K562 (cell line): ENCODE measurements at regions of chr2 and their contacts with region 1.

Region 1: DNA sequence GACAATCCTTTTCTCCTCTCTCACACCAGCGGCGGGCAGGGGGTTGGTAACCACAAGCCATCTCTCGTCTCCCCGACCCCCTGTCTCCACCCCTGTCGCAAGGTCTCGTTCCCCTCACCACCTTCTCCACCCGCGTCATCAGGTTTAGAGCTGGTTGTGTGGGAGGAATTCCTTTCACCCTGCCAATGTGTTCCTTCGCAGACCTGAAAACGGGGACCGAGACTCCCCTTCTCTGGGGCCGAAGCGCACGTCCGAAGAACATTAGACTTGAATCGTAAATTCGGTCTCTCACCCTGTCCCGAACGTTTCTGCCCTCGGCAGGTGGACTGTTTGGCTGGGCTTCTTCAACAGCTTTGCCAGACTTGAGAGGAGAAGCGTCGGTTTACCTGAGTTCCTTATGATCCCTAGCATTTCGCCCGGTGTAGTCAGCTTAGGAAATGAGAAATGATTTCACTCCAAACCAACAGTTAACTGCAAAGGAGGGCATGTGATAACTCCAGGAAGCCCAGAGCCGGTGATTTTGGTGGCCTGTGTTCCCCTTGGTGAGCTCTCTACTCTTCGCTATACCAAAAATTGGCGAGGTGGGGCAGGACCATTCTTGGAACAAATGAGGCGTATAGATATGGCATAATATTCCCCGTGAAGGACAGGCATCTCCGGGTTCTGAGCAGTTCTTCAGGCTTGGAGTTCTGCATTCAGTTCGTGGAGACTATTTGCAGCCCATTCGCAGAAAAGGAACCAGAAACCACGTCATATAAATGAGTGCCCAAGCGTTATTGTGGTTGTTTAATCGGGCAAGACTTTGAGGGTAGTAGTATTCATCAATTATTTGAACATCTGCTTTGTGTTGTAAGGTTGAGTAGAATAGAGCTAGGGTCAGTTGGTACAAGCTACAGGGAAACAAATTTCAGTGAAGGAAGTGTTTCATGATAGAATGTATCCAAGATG is 694 bp downstream of the CFAP36 start:
- DNase-seq: peak; percentile 21 to 45 (median 38)
- ATAC-seq: peak; percentile 25
- H3K4me3 ChIP-seq: peak overlapping the region; percentile 84
- H3K27ac ChIP-seq: peak overlapping the region; percentile 53
- H3K4me1 ChIP-seq: peaks cover 2 to 3% of the 10 kb centered on the region in 2 experiments; a peak in 2 of 5 replicates
- H3K27me3 ChIP-seq: no peaks in the 10 kb centered on the region
- CTCF ChIP-seq: no peak
- EP300 ChIP-seq: no peak
- POLR2A ChIP-seq: no peak
- RAD21 ChIP-seq: no peak

Region 2: GRCh38 chr2:54634564-54635511 is 885.4 kb before region 1 on chr2:
- CTCF ChIA-PET with region 1: no interaction called
- POLR2A ChIA-PET with region 1: no interaction called
- in situ Hi-C with region 1: no loop called
- intact Hi-C with region 1: no loop called
- DNase-seq: no peak
- ATAC-seq: peak; percentile 45; the same call in 1 of the 3 replicates
- H3K4me3 ChIP-seq: no peak overlapping the region
- H3K27ac ChIP-seq: no peak overlapping the region
- H3K4me1 ChIP-seq: peaks cover 3% of the 10 kb centered on the region in 2 experiments; a peak in 1 of 5 replicates
- H3K27me3 ChIP-seq: no peaks in the 10 kb centered on the region
- CTCF ChIP-seq: no peak
- EP300 ChIP-seq: no peak
- POLR2A ChIP-seq: no peak
- RAD21 ChIP-seq: no peak

Region 3: GRCh38 chr2:54838585-54839035 is 681.6 kb before region 1 on chr2:
- CTCF ChIA-PET with region 1: no interaction called
- POLR2A ChIA-PET with region 1: no interaction called
- in situ Hi-C with region 1: no loop called
- intact Hi-C with region 1: no loop called
- DNase-seq: peak; percentile 57 to 67 (median 64)
- ATAC-seq: peak; percentile 93
- H3K4me3 ChIP-seq: no peak overlapping the region
- H3K27ac ChIP-seq: no peak overlapping the region
- H3K4me1 ChIP-seq: no peaks in the 10 kb centered on the region
- H3K27me3 ChIP-seq: peaks cover 21 to 43% of the 10 kb centered on the region in 2 experiments
- CTCF ChIP-seq: peak; percentile 63 to 81 (median 78)
- EP300 ChIP-seq: no peak
- POLR2A ChIP-seq: no peak
- RAD21 ChIP-seq: peak; percentile 65 to 77

Region 4: DNA sequence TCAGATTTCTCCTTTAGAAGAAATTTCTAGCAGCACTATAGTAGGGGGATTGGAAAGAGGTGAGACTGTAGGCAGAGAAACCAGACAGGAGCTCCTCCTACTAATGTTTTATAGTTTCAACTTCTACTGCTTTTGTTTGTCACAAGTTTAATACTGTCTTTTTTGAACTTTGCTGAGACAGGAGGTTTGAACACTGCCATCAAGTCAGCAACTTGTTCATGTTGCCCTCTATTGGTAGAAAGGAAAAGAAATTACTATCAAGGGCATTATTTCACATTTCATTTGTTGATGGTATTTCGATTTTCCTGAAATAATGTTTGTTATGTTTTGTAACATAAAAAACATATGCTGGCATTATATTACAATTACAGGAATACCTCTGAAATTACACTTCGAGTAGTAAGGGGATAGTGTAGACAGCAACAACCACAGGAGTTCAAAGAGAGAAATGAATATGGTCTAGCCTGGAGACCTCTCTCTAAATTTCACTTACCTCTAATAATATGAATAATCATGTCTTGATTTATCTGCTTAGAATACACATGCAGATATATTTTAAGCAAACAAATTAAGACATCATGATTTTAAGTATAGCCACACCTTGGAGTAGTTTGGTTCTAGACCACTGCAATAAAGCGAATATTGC is 88.1 kb before region 1 on chr2:
- CTCF ChIA-PET with region 1: no interaction called
- POLR2A ChIA-PET with region 1: no interaction called
- in situ Hi-C with region 1: no loop called
- intact Hi-C with region 1: loop called (anchors 2 kb)
- DNase-seq: peak in 2 of 4 experiments; percentile 22 to 30
- ATAC-seq: peak; percentile 68
- H3K4me3 ChIP-seq: no peak overlapping the region
- H3K27ac ChIP-seq: no peak overlapping the region
- H3K4me1 ChIP-seq: no peaks in the 10 kb centered on the region
- H3K27me3 ChIP-seq: no peaks in the 10 kb centered on the region
- CTCF ChIP-seq: peak; percentile 26 to 73 (median 47); a peak in 5 of 6 replicates
- EP300 ChIP-seq: no peak
- POLR2A ChIP-seq: no peak
- RAD21 ChIP-seq: peak; percentile 45 to 74

Region 5: DNA sequence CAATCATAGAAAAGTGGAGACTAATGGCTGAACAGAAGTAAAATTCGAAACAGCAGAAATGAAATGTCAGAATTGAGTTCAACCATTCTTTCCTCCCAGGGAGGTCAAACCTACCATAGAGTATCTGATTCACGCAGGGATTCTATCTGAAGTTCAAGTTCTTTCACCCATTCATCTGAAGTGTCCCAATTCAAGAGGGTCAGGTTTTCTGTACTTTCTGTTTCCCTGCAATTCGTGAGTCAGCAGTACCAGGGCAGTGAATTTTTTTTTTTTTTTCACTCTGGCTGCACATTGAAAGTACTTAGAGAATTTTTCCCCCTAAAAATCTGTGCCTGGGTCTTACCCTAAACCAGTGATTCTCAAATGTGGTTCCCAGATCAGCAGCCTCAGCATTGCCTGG is 59.6 kb before region 1 on chr2:
- CTCF ChIA-PET with region 1: no interaction called
- POLR2A ChIA-PET with region 1: interaction called, 4 read pairs
- in situ Hi-C with region 1: no loop called
- intact Hi-C with region 1: loop called (anchors 2 kb)
- DNase-seq: peak in 2 of 4 experiments; percentile 29 to 30
- ATAC-seq: peak; percentile 57
- H3K4me3 ChIP-seq: no peak overlapping the region
- H3K27ac ChIP-seq: peak overlapping the region; percentile 74; the same call in 1 of the 3 replicates
- H3K4me1 ChIP-seq: peaks cover 0 to 25% of the 10 kb centered on the region in 2 experiments; a peak in 4 of 5 replicates
- H3K27me3 ChIP-seq: no peaks in the 10 kb centered on the region
- CTCF ChIP-seq: no peak
- EP300 ChIP-seq: no peak
- POLR2A ChIP-seq: no peak
- RAD21 ChIP-seq: no peak

Region 6: GRCh38 chr2:55530539-55531081 is 10.4 kb after region 1 on chr2:
- CTCF ChIA-PET with region 1: no interaction called
- POLR2A ChIA-PET with region 1: interaction called, 10 read pairs
- in situ Hi-C with region 1: no loop called
- intact Hi-C with region 1: no loop called
- DNase-seq: no peak
- ATAC-seq: no peak
- H3K4me3 ChIP-seq: no peak overlapping the region
- H3K27ac ChIP-seq: no peak overlapping the region
- H3K4me1 ChIP-seq: no peaks in the 10 kb centered on the region; a peak in 1 of 5 replicates
- H3K27me3 ChIP-seq: no peaks in the 10 kb centered on the region
- CTCF ChIP-seq: no peak
- EP300 ChIP-seq: no peak
- POLR2A ChIP-seq: no peak
- RAD21 ChIP-seq: no peak

Region 7: GRCh38 chr2:55604027-55604565 is 83.9 kb after region 1 on chr2:
- CTCF ChIA-PET with region 1: no interaction called
- POLR2A ChIA-PET with region 1: no interaction called
- in situ Hi-C with region 1: no loop called
- intact Hi-C with region 1: no loop called
- DNase-seq: no peak
- ATAC-seq: no peak
- H3K4me3 ChIP-seq: no peak overlapping the region
- H3K27ac ChIP-seq: no peak overlapping the region
- H3K4me1 ChIP-seq: peaks cover 0 to 2% of the 10 kb centered on the region in 2 experiments; a peak in 2 of 5 replicates
- H3K27me3 ChIP-seq: no peaks in the 10 kb centered on the region
- CTCF ChIP-seq: no peak
- EP300 ChIP-seq: no peak
- POLR2A ChIP-seq: no peak
- RAD21 ChIP-seq: no peak

Region 8: DNA sequence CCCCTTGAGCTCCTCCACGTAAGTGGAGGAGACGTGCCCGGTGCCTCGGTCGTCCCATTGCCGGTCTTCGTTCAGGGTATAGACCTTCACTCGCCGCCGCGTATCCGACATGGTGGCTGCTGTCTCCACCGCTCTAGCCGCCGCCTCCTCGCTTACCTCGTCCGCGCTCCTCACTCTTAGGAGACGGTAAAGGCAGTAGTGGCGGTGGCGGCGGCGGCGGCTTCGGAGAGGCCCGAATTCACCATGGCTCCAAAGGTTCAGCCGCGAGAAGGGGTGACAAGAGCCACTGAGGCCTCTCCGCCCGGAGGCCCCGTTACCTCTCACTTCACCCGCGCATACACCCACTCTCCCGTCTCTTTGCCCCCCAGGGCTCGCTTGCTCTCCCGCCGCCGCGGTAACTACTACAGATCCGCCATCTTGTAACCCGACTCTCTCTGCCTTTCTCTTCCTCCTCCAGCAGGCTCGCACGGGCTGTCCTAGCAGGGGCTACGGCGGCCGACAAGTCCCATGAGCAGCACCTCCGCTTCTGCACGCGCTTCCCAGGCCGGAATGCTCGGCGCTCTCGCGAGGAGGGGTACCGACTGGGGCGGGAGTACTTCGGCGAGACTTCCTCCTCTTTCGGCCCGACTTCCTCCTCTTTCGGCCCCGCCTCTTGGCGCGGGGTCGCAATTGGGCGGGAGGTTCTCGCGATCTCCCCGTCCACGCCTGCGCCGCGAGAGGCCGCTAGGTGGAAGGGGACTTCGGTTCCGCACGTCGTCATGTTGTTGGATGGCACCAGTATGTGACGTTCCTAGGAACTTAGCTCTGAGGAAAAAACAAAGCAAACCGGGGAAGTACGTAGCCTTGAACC is 97.2 kb after region 1 on chr2 and contains the start of gene PPP4R3B:
- CTCF ChIA-PET with region 1: no interaction called
- POLR2A ChIA-PET with region 1: interaction called, 8 read pairs
- in situ Hi-C with region 1: no loop called
- intact Hi-C with region 1: loop called (anchors 2 kb)
- DNase-seq: peak; percentile 89 to 99 (median 94)
- ATAC-seq: peak; percentile 86
- H3K4me3 ChIP-seq: peak within 1 kb of the TSS; percentile 98
- H3K27ac ChIP-seq: peak within 1 kb of the TSS; percentile 99
- H3K4me1 ChIP-seq: peaks cover 6 to 8% of the 10 kb centered on the region in 2 experiments; a peak in 4 of 5 replicates
- H3K27me3 ChIP-seq: no peaks in the 10 kb centered on the region
- CTCF ChIP-seq: peak; percentile 21 to 49 (median 48); a peak in 3 of 6 replicates
- EP300 ChIP-seq: no peak
- POLR2A ChIP-seq: peak; percentile 95
- RAD21 ChIP-seq: no peak
- polyA plus RNA-seq, gene PPP4R3B: 13.2 to 15.7 TPM